ENCODE measurements at regions of chr2 and their contacts with region 1.

Region 1: DNA sequence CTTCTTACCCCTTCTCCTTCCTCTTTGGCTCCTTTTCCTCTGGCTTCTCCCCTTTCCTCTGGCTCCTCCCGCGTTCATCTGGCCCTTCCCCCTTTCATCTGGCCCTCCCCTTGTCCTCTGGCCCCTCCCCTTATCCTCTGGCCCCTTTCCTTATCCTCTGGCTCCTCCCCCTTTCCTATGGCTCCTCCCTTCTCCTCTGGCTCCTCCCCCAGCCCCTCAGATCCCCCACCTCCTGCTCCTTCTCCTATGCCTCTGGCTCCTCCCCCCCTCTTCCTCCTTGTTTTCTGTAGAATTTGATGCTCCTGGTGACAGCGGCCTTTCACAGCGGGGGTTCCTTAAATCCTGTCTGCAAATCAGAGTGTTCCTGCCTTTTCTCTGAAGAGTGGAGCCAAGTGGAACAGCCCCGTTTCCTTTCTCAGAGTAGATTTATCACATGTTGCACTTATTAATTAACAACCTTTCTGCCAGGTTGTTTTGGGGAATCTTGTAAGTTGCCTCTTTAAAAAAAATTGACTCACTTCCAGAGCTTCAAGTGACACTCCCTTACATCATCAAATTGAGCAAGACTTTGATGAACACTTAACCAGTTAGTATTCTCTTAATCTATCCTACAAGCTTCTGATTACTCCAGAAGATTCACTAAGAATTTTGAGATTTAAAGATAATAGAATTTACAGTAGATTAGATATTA is 27.9 kb downstream of the FABP1 start:
- DNase-seq: no peak
- ATAC-seq: peak; percentile 45

Region 2: DNA sequence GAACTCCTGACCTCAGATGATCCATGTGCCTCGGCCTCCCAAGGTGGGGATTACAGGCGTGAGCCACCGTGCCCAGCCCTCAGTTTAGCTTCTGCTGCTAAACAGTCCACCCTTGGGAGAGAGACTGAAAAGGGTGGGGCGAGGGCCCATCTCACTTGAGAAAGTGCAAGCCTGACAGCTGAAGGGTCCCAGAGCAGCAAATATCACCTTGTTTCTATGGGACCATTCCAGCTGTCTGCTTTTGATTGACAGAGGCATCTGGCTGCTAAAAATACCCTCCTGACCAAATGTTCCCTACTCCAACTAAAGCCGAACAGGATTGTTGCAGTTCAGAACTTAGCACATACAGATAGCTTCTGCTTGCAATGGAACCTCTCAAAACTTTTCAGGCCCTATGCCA is 32.8 kb before region 1 on chr2:
- intact Hi-C with region 1: loop called (anchors 2 kb)
- DNase-seq: no peak
- ATAC-seq: peak; percentile 82